ENCODE measurements at regions of chr12 and their contacts with region 1.

Region 1: GRCh38 chr12:53352331-53353256 is 16.4 kb upstream of the SP7 start:
- DNase-seq: peak; percentile 90
- ATAC-seq: peak; percentile 97

Region 2: DNA sequence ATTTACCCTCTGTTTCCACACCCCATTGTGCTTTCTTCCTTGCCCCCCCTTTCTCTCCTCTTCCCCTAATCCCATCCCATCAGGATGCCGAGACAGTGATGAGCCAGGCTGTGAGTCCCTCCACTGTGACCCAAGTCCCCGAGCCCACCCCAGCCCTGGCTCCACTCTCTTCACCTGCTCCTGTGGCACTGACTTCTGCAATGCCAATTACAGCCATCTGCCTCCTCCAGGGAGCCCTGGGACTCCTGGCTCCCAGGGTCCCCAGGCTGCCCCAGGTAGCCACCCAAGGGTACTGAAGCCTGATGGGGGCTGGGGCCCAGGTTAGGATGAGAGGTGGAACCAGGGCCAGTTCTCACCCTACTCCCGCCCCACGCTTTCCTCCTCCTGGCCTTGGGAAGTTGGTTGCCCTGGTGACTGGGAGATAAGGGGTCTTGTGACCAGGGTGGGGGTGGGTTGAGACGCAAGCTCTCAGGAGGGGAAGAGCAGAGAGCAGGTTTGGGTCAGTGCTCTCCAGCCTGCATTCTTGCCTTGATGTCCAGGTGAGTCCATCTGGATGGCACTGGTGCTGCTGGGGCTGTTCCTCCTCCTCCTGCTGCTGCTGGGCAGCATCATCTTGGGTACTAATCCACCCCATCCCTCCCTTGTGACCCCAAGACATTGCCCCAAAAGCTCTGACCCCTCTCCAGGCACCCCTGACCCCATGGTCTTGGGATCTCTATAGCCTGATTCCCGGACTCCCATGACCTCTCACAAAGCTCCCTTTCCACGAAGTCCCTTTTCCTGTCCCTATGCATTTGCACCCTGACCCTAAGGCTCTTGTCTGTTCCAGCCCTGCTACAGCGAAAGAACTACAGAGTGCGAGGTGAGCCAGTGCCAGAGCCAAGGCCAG is 72.3 kb after region 1 on chr12:
- intact Hi-C with region 1: loop called (anchors 5 kb)
- DNase-seq: no peak
- ATAC-seq: no peak

Region 3: GRCh38 chr12:53500776-53501614 is 148.4 kb after region 1 on chr12 and contains the start of gene TARBP2:
- intact Hi-C with region 1: loop called (anchors 10 kb)
- DNase-seq: peak; percentile 99
- ATAC-seq: peak; percentile 91
- total RNA-seq, gene TARBP2: 19.4 TPM

Region 4: DNA sequence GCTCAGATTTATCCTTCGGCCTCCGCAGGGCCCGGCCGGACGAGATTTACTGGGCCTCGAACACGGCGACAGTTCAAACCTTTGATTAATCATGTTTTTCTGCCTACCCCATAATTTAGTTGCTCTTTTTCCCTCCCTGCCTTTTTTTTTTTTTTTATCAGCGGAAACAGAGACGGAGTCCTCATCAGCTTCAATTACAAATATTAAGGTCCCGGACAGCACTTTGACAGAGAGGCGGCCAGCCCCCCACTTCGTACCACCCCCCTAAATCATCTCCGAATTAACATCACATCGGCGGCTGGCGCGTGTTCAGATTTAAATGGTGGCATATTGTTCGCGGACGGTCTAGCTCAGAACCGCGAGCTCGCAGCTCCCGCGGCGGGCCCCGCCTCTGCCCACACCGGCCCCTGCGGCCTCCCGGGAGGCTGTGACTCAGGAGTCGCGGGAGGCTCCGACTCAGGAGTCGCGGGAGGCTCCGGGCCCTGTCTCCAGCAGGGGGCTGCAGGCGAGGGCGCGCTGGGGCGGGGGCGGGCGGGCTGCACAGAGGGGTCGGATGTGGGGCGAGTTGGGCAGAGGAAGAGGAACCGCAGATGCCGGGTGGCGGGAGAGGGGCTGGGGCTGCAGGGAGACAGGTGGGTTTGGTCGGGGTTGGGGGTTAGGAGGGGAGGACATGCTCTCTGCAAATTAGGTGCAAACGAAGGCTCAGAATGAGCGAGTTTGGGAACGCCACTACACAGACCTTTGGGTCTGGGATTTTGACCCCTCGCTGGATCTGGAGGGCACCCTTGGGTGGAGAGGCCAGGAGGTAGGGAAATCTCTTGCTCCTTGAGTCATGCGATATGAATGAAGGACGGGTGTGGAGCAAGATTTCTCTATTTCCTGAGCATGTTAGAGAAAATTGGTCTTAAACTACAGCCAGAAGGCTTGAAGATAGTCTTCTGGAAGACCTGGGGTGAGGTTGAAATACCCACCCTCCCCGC is 342.8 kb after region 1 on chr12:
- intact Hi-C with region 1: no loop called
- DNase-seq: peak; percentile 67
- ATAC-seq: peak; percentile 21

Region 5: GRCh38 chr12:53798575-53798974 is 446.0 kb after region 1 on chr12:
- intact Hi-C with region 1: no loop called
- DNase-seq: no peak
- ATAC-seq: peak; percentile 71